ENCODE measurements at regions of chr3 and their contacts with region 1.

Region 1: DNA sequence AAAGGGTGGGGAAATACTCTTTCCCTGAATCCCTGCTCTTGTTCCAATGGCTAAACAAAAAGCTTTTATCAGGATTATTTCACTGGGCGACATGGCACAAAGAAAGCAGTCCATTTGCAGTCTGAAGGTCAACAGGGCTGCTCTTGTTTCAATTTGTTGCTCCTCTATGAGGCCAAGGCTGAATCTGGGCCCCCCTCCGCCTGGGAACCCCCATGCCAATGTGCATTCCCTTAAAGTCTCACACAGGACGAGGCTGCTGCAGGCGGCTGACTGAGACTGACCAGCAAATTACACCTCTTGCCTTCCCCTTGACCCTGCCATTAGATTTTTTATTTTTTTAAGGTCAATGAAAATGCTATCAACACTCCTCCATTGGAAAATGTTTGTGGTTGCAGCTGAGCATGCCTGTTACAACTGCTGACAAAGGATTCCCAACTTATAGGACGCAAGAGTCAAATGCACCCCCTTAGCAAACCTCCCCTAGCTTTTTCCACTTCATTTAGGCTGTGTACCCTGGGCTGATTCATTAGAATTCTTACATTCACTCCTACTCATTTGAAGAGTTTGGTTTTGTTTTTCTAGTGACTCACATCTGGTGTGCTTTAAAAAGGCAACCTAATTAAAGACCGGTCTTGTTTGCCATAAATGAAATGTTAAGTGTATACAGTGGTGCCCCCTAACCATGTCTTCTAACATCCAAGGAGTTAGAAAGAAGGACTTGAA is 60.8 kb upstream of the ARHGEF3 start:
- DNase-seq: peak; percentile 79
- H3K4me3 ChIP-seq: no peak overlapping the region
- H3K27ac ChIP-seq: no peak overlapping the region
- H3K4me1 ChIP-seq: peaks cover 18% of the 10 kb centered on the region
- H3K27me3 ChIP-seq: no peaks in the 10 kb centered on the region
- CTCF ChIP-seq: no peak

Region 2: DNA sequence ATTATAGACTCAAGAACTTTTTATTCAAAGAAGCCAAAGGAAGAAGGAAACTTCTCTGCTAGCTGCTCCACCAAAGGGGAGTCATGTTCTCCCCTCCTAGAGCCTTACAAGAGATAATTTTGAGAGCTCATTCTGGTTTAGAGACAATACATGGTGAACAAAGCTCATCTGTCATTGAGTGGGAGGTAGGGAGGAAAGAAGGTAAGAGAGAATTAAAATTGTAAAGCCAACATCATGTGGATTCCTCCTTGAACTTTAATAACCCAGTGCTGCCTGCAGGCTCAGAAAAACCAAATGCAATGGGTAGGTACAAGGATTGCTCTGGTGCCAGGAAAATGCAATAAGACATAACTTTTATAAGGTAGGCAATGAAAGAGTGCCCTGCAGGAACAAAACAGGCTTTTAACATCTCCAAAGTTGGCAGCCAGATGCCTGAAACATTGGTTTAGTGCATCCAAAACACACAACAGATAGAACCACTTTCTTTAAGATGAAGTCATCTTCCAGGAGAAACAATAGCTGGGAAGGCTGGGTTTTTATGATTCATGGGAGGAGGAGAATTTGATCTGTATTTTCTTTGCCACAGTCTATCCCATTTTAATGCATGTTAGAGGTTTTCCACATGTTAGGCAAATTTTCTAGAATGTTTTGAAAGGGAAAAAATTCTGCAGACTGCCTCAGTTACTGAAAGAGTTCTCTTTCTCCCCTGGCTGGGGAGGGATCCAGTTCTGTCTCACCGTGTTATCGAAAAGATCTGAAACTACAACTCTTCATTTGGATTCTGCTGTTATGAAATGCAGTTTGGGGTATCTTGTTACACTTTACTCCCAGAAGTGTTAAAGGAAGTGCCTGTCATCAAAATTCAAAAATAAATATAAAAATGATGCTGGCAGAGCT is 49.5 kb before region 1 on chr3:
- CTCF ChIA-PET with region 1: no interaction called
- dilution Hi-C with region 1: loop called (anchors 10 kb)
- in situ Hi-C with region 1: no loop called
- intact Hi-C with region 1: no loop called
- DNase-seq: peak; percentile 65
- H3K4me3 ChIP-seq: no peak overlapping the region
- H3K27ac ChIP-seq: peak overlapping the region; percentile 8
- H3K4me1 ChIP-seq: peaks cover 39% of the 10 kb centered on the region
- H3K27me3 ChIP-seq: no peaks in the 10 kb centered on the region
- CTCF ChIP-seq: no peak

Region 3: DNA sequence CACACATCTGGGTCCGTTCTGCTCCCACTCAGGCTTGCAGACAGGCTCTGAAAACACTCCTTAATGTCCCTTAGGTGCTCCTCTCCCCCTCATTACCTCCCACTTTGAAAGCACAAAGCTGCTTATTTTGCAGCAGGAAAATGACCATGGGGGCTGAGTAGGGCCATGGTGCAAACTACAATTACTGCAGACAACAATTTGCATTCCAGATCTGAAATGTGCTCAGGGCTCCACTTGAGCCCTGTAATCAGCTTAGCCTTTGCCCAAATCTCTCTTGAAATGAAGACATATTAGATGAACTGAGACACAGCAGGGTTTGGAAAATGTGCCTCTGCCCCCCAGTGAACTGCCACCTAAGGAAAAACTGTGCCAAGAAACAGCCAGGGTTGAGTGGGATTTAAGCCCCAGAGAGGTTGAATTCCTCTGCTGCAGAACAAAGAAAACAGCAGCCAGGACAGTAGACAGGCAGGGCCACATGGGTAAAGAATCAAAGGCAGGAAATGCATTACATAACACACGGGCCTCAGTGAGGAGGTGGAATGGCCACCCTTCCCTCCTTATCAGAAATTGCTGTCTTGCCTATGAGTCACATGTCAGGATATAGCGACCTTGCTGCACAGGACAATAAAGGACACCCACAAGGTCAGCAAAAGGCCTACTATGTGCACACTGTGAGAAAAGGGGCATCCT is 66.0 kb after region 1 on chr3:
- CTCF ChIA-PET with region 1: no interaction called
- dilution Hi-C with region 1: loop called (anchors 5 kb)
- in situ Hi-C with region 1: no loop called
- intact Hi-C with region 1: no loop called
- DNase-seq: no peak
- H3K4me3 ChIP-seq: no peak overlapping the region
- H3K27ac ChIP-seq: no peak overlapping the region
- H3K4me1 ChIP-seq: peaks cover 46% of the 10 kb centered on the region
- H3K27me3 ChIP-seq: no peaks in the 10 kb centered on the region
- CTCF ChIP-seq: no peak

Region 4: DNA sequence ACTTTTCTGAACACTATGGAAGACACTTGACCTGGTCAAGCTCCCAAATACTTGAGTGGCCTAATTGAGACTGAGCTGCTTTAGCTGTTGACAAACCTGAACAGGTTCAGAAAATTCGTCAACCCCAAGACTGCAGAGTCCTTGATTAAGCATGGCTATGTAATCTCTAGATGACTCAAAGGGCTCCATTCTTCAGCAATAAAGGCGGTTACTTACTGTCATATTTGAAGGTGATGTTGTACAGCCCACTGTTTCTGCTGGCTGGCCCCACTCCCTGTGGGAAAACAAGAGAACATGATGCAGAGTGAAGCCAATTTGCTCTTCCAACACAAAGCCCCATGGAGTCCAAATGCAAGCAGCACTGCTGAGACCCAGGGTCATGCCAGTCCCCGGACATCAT is 257.5 kb after region 1 on chr3:
- CTCF ChIA-PET with region 1: no interaction called
- dilution Hi-C with region 1: no loop called
- in situ Hi-C with region 1: no loop called
- intact Hi-C with region 1: no loop called
- DNase-seq: no peak
- H3K4me3 ChIP-seq: no peak overlapping the region
- H3K27ac ChIP-seq: no peak overlapping the region
- H3K4me1 ChIP-seq: no peaks in the 10 kb centered on the region
- H3K27me3 ChIP-seq: no peaks in the 10 kb centered on the region
- CTCF ChIP-seq: no peak

Measured in mammary epithelial cell (primary cell).